ENCODE measurements at regions of chr17 and their contacts with region 1.

Region 1: GRCh38 chr17:50626037-50626574 is 8.6 kb upstream of the ABCC3 start:
- H3K4me3 ChIP-seq: no peak overlapping the region
- H3K27ac ChIP-seq: no peak overlapping the region
- H3K4me1 ChIP-seq: no peaks in the 10 kb centered on the region; the same call in 1 of the 2 replicates
- CTCF ChIP-seq: peak; percentile 92

Region 2: DNA sequence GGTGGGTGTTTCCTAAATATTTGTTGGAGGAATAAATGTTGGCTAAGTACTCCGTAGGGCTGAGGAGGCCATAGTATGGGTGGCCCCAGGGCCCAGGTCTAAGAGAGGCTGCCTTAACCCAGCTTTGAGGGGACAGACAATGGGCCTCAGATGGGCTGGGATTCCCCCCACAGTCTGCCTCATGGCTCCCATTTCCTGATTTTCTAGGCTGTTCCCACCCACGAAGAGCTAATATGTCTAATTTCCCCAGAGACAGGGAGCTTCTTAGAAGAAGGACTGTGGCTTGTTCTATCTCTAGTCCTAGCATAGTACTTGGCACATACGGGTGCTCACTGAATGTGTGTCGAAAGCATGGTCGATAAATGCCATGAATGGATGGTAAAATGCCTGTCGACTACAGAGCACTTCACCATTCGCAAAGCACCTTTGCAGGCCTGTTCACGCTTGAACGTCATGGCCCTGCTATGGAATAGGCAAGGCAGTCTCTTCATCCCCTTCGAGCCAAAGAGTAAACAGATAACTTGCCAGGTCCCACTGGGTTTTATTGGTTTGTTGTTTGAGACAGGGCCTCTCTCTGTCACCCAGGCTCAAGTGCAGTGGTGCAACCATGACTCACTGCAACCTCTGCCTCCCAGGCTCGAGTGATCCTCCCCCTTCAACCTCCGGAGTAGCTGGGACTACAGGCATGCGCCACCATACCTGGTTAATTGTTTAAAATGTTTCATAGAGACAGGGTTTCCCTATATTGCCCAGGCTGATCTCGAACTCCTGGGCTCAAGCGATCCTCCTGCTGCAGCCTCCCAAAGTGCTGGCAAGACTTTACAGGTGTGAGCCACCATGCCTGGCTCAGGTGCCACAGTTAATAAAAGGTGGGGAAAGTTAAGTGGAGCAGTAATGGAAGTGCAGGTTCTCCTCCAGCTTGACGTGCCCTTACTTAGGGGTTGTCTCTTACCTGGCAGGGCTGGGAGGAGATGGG is 167.1 kb before region 1 on chr17:
- CTCF ChIA-PET with region 1: no interaction called
- POLR2A ChIA-PET with region 1: no interaction called
- H3K4me3 ChIP-seq: no peak overlapping the region
- H3K27ac ChIP-seq: peak overlapping the region; percentile 25; the same call in 1 of the 2 replicates
- H3K4me1 ChIP-seq: peaks cover 17% of the 10 kb centered on the region
- CTCF ChIP-seq: no peak

Region 3: DNA sequence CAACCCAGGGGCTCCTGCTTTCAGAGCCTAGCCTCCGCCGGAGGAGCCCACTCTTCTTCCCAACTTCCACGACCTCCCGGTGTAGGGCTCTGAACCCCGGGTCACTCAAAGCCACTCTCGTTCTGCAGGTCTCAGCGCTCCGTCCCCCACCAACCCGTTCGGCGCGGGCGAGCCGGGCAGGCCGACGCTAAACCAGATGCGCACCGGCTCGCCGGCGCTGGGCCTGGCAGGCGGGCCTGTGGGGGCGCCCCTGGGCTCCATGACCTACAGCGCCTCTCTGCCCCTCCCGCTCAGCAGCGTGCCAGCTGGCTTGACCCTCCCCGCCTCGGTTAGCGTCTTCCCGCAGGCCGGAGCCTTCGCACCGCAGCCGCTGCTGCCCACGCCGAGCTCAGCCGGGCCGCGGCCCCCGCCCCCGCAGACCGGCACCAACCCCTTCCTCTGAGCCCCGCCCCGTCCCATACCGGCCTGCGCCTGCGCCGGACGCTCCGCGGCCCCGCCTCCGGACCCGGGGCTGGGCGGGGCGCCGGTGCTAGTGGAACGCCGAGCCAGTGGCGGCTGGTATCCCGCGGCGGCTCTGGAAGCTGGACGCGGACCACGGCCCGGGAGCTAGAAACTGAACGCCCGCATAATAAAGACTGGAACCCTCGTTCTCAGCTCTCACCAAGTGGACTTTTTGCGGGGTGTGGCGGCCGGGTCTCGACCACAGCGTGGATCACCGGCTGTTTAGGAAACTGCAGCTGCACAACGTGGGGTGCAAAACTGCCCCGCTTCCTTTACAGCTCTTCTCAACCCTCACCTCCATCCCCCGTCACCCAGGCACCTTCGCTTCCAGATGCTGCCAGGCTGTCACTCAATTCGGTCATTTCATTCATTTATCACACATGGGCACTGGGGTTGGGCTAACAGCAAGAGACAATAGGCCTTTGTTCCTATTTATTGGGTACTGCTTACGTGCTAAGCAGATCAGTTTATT is 84.1 kb before region 1 on chr17:
- CTCF ChIA-PET with region 1: interaction called, 231 read pairs
- POLR2A ChIA-PET with region 1: no interaction called
- H3K4me3 ChIP-seq: peak overlapping the region; percentile 51
- H3K27ac ChIP-seq: peak overlapping the region; percentile 42; the same call in 1 of the 2 replicates
- H3K4me1 ChIP-seq: peaks cover 8% of the 10 kb centered on the region
- CTCF ChIP-seq: peak; percentile 90; the same call in 1 of the 2 replicates

Region 4: GRCh38 chr17:50560185-50560824 is 65.8 kb before region 1 on chr17 and contains the start of gene CACNA1G:
- CTCF ChIA-PET with region 1: interaction called, 20 read pairs
- POLR2A ChIA-PET with region 1: interaction called, 5 read pairs
- H3K4me3 ChIP-seq: peak within 1 kb of the TSS; percentile 38
- H3K27ac ChIP-seq: no peak within 1 kb of the TSS; the same call in 1 of the 2 replicates
- H3K4me1 ChIP-seq: peaks cover 5% of the 10 kb centered on the region; the same call in 1 of the 2 replicates
- CTCF ChIP-seq: no peak

Region 5: DNA sequence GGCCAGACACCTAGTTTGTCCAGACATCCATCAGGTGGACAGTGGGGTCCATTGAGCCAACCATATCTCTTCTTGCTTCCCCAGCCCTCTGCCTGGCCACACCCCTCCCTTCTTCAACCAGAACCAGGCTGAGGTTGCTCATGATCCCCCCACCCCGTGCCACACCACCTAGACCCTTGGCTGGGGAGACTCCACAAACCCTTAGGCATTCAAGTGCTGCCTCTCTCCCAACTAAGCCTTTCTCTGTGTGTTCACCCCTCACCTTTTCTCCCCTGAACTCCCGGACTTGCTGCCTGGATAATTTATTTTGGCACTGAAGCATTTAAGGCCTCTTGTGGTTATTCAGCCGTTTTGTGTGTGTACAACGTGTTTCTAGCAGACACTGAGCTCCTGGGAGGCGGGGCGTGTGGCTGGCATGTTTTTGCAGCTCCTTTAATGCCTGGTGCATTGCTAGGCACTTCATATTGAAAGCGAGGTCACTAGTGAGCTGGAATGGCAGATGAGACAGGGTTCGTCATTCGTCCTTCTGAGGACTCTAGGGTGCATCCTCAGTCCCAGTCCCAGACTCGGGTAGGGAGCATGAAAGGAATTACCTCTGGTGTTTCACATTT is 36.9 kb before region 1 on chr17:
- CTCF ChIA-PET with region 1: interaction called, 15 read pairs
- POLR2A ChIA-PET with region 1: no interaction called
- H3K4me3 ChIP-seq: no peak overlapping the region
- H3K27ac ChIP-seq: no peak overlapping the region
- H3K4me1 ChIP-seq: 0 out of 2 replicates have a peak, but pooled peaks cover 3% of the 10 kb centered on the region
- CTCF ChIP-seq: no peak

Region 6: DNA sequence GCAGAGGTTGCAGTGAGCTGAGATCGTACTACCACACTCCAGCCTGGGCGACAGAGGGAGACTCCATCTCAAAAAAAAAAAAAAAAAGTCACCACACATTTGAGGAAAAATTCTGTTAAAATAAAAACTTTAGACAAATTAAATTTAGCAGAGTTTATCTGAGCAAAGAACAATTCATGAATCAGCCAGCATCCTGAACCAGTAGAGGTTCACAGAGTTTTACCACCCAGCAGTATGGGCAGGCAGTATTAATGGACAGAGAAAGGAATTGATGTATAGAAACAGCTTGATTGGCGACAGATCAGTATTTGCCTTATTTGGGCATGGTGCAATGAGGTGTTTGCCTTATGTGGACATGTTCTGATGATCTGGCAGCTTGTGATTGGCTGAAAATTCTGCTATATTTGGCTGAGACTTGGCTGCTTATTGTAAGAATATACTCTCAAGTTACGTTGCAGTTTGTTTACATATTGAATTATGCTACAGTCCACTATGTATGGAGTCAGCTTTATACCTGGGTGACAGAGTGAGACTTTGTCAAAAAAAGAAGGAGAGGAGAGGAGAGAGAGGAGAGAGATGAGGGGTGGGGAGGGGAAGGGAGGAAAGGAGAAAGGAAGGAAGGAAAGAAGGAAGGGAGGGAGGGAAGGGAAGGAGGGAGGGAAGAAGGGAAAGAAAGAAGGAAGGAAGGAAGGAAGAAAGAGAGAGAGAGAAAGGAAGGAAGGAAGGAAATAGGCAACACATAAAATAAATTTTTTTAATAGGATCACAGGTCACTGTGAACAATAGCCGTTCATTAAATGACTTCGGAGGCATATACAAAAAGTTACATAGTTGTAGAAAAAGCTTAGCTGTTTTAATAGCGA is 23.2 kb after region 1 on chr17:
- CTCF ChIA-PET with region 1: interaction called, 10 read pairs
- POLR2A ChIA-PET with region 1: no interaction called
- H3K4me3 ChIP-seq: no peak overlapping the region
- H3K27ac ChIP-seq: no peak overlapping the region
- H3K4me1 ChIP-seq: no peaks in the 10 kb centered on the region
- CTCF ChIP-seq: no peak

Region 7: DNA sequence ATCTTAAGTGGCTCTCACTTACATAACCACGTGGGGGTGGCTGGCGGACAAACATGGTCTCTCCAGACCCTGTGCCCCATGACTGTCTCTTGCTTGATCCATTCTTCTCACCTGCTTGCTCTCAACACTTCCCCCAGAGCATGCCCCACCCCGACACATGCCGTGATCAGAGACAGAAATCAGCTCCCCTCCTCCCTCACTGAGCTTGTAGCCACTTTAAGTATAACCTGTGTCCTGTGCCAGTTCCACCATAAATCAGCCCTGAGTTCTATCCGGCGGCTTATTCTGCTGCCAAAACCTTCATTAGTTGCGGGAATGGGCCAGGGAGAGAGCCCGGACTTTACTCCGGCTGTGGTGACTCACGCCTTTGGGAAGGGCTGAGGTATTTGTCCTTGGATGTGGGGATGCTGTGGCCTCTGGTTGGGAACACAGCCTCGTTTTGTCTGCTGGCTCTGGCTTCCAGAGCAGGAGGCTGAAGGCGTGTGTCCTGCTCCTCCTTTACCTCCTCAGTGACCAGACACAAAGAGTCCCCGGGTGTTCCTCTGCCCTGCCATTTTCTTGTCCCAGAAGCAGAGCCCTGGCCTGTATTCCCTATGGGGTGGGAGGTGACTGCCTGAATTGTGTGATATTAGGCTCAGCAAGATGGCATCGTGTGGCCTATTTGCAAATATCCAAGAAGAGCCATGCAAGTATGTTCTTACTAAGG is 60.5 kb after region 1 on chr17:
- CTCF ChIA-PET with region 1: interaction called, 200 read pairs
- POLR2A ChIA-PET with region 1: interaction called, 3 read pairs
- H3K4me3 ChIP-seq: no peak overlapping the region
- H3K27ac ChIP-seq: no peak overlapping the region
- H3K4me1 ChIP-seq: peaks cover 6% of the 10 kb centered on the region; the same call in 1 of the 2 replicates
- CTCF ChIP-seq: no peak

Region 8: DNA sequence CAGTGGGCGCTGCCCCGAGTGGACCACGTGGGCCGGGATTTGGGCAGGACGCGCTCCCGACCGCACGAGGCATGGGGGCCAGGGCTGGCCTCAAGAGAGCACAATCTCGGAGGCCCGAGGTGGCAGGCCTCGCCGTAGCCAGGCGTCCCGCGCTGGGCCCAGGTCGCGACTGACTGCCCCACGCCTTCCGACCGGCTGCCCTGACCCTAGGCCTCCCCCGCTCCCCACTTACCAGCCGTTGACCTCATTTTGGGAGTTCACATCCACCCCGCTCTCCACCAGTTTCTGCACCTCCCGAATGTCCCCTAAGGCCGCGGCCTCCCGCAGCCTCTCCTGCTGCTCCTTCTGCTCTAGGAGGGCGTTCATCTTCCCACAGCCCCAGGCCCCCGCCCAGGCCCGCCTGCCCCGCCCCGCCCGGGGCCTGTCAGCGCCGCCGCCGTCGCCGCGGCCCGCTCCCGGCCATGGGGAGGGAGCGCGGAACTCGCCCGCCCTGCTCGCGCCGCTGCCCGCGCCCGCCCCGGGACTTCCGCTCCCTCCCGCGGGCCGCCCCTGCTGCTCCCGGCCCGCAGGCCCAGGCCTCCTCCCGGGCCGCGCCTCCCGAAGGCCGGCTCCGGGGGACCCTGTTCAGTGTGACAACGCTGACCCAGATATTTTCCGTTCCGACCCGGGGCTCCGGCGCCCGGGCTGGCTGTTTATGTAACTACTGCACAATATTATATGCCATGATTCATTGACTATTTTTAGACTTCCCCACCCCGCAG is 81.4 kb after region 1 on chr17 and contains the start of gene ANKRD40:
- CTCF ChIA-PET with region 1: interaction called, 10 read pairs
- POLR2A ChIA-PET with region 1: no interaction called
- H3K4me3 ChIP-seq: peak within 1 kb of the TSS; percentile 89
- H3K27ac ChIP-seq: peak within 1 kb of the TSS; percentile 99
- H3K4me1 ChIP-seq: peaks cover 9% of the 10 kb centered on the region
- CTCF ChIP-seq: peak; percentile 28; the same call in 1 of the 2 replicates

Region 9: DNA sequence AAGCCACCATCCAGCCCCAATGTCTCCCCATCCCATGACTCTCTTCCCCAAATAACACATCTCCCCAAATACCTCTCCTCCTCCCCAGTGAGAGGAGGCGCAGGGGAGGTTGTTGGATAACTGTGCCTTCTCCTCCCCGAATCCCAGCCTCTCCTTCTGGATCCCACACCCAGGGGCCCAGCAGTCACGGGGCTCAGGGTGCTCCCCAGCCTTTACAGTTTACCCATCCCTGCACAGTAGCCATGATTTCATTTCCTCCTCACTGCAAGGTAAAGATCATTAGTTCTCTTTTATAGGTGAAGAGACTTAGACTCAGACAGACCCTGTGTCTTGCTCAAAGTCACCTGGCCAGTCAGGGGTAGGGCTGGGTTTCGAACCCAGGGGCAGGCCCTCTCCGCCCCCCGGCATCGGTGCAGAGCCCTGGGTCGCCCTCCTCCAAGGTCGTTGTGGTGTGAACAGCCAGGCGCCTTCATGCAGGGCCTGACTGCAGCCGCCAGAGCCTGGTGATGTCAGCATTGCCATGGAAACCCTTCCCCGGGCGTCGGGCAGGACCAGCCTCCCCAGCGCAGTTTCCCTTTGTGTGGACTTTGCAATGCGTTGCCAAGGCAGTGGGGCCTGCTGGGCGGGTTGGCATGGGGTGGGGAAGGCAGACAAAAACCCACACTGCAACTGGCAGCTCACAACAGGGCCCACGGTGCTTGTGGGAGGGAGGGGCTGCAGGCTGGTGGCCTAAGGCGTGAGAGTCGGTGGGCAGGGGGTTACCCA is 293.4 kb after region 1 on chr17:
- CTCF ChIA-PET with region 1: no interaction called
- POLR2A ChIA-PET with region 1: no interaction called
- H3K4me3 ChIP-seq: no peak overlapping the region
- H3K27ac ChIP-seq: no peak overlapping the region
- H3K4me1 ChIP-seq: peaks cover 2% of the 10 kb centered on the region
- CTCF ChIP-seq: no peak

Measured in HEK293 (cell line).